HepG2 (cell line): ENCODE measurements at regions of chr3 and their contacts with region 1.

Region 1: DNA sequence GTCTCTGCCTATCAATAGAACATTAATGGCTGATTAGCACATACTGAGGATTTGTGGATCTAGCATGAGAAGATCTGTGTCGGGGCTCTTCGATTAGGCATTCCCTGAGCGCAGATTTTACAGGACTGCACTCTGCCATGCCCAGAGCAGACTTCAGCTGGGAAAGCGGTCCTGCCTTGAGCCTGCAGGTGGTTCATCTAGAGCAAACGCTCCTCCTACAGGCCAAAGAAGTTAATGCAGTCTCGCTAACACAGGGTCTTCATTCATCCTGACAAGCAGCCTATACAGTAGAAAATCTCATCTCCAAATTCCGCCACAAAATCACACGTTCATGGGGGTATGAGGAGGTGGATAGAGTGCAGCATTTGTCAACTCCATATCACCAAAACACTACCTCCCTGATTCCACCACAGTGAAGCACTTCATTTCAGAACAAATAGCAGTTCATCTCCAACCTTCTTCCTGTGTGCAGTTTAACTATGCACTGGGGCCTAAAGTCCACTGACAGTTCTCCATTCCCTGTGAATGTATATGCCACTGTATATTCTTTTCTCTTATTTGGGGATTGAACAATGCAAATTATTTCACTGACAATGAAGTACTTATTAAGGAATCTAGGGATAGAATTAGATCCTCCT is 405.8 kb downstream of the IGSF11 start:
- DNase-seq: peak; percentile 80
- ATAC-seq: peak; percentile 99
- H3K4me3 ChIP-seq: peak overlapping the region; percentile 6 to 39 (median 30); a peak in 3 of 6 replicates
- H3K27ac ChIP-seq: no peak overlapping the region
- H3K4me1 ChIP-seq: peaks cover 35% of the 10 kb centered on the region
- H3K27me3 ChIP-seq: no peaks in the 10 kb centered on the region
- CTCF ChIP-seq: peak; percentile 94
- EP300 ChIP-seq: no peak
- POLR2A ChIP-seq: no peak
- RAD21 ChIP-seq: peak; percentile 73

Region 2: GRCh38 chr3:117898722-117899522 is 729.9 kb before region 1 on chr3:
- CTCF ChIA-PET with region 1: no interaction called
- POLR2A ChIA-PET with region 1: no interaction called
- in situ Hi-C with region 1: no loop called
- intact Hi-C with region 1: loop called (anchors 5 kb)
- DNase-seq: peak; percentile 14
- ATAC-seq: peak; percentile 62; the same call in 2 of the 3 replicates
- H3K4me3 ChIP-seq: no peak overlapping the region
- H3K27ac ChIP-seq: no peak overlapping the region
- H3K4me1 ChIP-seq: no peaks in the 10 kb centered on the region
- H3K27me3 ChIP-seq: no peaks in the 10 kb centered on the region; a peak in 1 of 5 replicates
- CTCF ChIP-seq: 0 out of 2 replicates have a peak, but pooled peaks have one; percentile 13
- EP300 ChIP-seq: no peak
- POLR2A ChIP-seq: no peak
- RAD21 ChIP-seq: no peak

Region 3: GRCh38 chr3:117997201-117998049 is 631.4 kb before region 1 on chr3:
- CTCF ChIA-PET with region 1: no interaction called
- POLR2A ChIA-PET with region 1: no interaction called
- in situ Hi-C with region 1: loop called (anchors 25 kb)
- intact Hi-C with region 1: loop called (anchors 1 kb)
- DNase-seq: peak; percentile 56
- ATAC-seq: peak; percentile 99
- H3K4me3 ChIP-seq: 0 out of 6 replicates have a peak overlapping the region, but pooled peaks of 1 of the 3 experiments have one; percentile 10
- H3K27ac ChIP-seq: no peak overlapping the region
- H3K4me1 ChIP-seq: no peaks in the 10 kb centered on the region
- H3K27me3 ChIP-seq: peaks cover 0 to 3% of the 10 kb centered on the region in 2 experiments; a peak in 1 of 5 replicates
- CTCF ChIP-seq: peak; percentile 85
- EP300 ChIP-seq: no peak
- POLR2A ChIP-seq: no peak
- RAD21 ChIP-seq: no peak

Region 4: DNA sequence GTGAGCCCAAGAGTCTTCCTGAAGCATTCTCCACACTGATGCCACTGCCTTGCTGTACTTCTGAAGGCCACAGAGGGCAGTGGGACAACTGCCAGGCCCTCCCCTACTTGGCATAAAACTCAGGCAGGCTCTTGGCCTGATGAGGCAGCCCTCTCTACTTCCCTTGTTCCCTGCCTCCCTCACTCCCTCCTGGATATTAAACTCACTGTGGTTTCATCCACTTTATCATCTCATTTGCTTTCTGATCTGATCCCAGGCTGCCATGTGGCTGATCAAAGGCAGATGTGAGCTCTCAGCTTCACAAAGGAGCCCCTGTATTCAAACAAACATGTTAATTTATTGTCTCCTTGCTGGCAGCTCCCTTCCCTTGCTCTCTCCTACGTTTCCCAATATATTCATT is 127.7 kb before region 1 on chr3:
- CTCF ChIA-PET with region 1: no interaction called
- POLR2A ChIA-PET with region 1: no interaction called
- in situ Hi-C with region 1: no loop called
- intact Hi-C with region 1: loop called (anchors 1 kb)
- DNase-seq: peak; percentile 28
- ATAC-seq: peak; percentile 86
- H3K4me3 ChIP-seq: no peak overlapping the region
- H3K27ac ChIP-seq: no peak overlapping the region
- H3K4me1 ChIP-seq: no peaks in the 10 kb centered on the region
- H3K27me3 ChIP-seq: 0 out of 5 replicates have a peak, but pooled peaks cover 0 to 2% of the 10 kb centered on the region in 2 experiments
- CTCF ChIP-seq: no peak
- EP300 ChIP-seq: no peak
- POLR2A ChIP-seq: no peak
- RAD21 ChIP-seq: no peak

Region 5: GRCh38 chr3:118541791-118542190 is 87.0 kb before region 1 on chr3:
- CTCF ChIA-PET with region 1: no interaction called
- POLR2A ChIA-PET with region 1: no interaction called
- in situ Hi-C with region 1: no loop called
- intact Hi-C with region 1: loop called (anchors 2 kb)
- DNase-seq: no peak
- ATAC-seq: no peak
- H3K4me3 ChIP-seq: no peak overlapping the region
- H3K27ac ChIP-seq: no peak overlapping the region
- H3K4me1 ChIP-seq: peaks cover 57% of the 10 kb centered on the region
- H3K27me3 ChIP-seq: no peaks in the 10 kb centered on the region
- CTCF ChIP-seq: no peak
- EP300 ChIP-seq: no peak
- POLR2A ChIP-seq: no peak
- RAD21 ChIP-seq: no peak

Region 6: DNA sequence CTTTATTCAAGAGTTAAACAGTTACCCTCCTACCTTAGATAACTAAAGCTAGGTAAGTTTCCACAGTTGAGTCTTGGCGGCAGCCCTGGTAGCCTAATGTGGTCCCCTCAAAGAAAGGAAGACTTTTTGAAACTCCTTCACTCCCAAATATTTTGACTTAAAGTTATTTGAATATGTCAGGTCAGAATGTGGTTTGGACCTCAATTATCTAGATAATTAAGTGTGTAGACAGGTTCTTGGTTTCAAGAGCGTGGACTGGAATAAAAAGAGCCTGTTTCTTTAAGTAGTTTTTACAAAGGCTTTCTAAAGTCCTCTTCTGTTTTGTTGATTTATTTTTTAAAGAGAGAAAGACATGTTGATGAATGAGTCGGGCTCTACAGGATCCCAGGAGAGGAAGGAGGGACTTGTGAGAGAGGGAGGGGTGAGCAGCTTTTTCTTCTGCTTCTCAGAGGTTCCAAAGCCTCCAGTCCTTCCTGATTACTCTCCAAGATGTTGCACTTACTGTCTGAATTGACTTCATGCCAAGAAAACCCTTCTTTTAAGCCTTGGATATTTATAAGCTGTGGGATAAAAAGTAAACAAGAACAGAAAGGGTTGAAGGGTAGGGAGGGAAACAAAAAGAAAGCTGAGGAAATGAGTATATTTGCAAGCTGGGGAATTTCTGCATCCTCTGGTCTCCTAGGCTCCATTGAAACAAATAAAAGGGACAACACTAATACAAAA is 51.6 kb before region 1 on chr3:
- CTCF ChIA-PET with region 1: no interaction called
- POLR2A ChIA-PET with region 1: no interaction called
- in situ Hi-C with region 1: no loop called
- intact Hi-C with region 1: no loop called
- DNase-seq: no peak
- ATAC-seq: no peak
- H3K4me3 ChIP-seq: no peak overlapping the region
- H3K27ac ChIP-seq: no peak overlapping the region
- H3K4me1 ChIP-seq: no peaks in the 10 kb centered on the region
- H3K27me3 ChIP-seq: no peaks in the 10 kb centered on the region; a peak in 1 of 5 replicates
- CTCF ChIP-seq: no peak
- EP300 ChIP-seq: no peak
- POLR2A ChIP-seq: no peak
- RAD21 ChIP-seq: no peak

Region 7: DNA sequence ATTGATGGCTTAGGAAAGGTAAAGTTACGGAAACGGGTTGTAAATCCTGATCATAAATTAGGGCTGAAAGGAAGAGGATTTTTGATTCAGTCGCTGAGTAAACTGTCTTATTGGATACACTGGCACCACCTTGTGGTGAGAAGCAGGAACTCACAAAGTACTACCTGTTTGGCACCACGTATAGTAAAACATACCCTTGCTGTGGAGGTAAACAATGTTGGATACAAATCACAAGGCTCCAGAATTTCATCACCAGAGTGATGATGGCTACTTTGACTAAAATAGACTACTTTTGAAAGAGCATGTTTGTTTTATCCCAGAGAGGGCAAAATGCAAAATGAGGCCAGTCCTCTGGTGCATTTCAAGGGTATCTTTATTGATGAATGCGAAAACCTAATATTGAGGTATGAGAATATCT is 188.9 kb after region 1 on chr3:
- CTCF ChIA-PET with region 1: no interaction called
- POLR2A ChIA-PET with region 1: no interaction called
- in situ Hi-C with region 1: no loop called
- intact Hi-C with region 1: loop called (anchors 5 kb)
- DNase-seq: peak; percentile 48
- ATAC-seq: peak; percentile 89
- H3K4me3 ChIP-seq: no peak overlapping the region
- H3K27ac ChIP-seq: no peak overlapping the region
- H3K4me1 ChIP-seq: no peaks in the 10 kb centered on the region
- H3K27me3 ChIP-seq: no peaks in the 10 kb centered on the region
- CTCF ChIP-seq: peak; percentile 78
- EP300 ChIP-seq: no peak
- POLR2A ChIP-seq: no peak
- RAD21 ChIP-seq: peak; percentile 16; the same call in 1 of the 2 replicates